Right ventricle myocardium inferior (tissue), 1 donor: ENCODE measurements at regions of chr12 and their contacts with region 1.

Region 1: GRCh38 chr12:115752913-115753726 is 524.4 kb downstream of the MED13L start:
- DNase-seq: no peak
- ATAC-seq: peak; percentile 90

Region 2: DNA sequence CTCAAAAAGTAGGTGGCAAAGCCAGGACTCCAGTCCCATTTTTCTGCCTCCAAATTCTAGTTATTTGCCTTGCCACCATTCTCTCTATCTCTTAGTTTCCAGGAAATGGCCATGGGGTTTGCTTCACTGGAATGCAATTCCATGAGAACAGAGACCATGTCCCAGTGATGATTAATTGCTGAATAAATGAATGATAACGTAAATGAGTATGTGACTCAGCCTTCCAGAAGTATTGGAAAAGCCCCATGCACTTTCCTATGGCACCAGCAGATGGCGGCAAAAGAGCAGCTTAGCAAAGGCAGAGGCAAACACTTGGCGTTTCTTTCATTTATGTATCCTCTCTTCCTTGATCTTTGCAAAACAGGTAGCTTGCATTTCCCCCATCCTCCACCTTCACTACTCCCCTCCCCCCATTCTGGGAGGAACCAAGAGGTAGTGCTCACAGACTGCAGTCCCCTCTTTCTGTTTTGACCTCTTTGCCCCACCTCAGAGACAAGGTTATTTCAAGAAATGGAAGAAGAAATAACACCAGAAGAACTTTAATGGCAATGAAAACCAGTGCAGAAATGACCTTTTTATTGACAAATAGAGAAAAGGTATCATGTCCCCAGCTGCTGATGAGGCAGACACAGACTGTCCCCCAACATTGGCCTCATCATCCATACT is 1090.5 kb before region 1 on chr12:
- intact Hi-C with region 1: loop called (anchors 1 kb)
- DNase-seq: no peak
- ATAC-seq: peak; percentile 37

Region 3: DNA sequence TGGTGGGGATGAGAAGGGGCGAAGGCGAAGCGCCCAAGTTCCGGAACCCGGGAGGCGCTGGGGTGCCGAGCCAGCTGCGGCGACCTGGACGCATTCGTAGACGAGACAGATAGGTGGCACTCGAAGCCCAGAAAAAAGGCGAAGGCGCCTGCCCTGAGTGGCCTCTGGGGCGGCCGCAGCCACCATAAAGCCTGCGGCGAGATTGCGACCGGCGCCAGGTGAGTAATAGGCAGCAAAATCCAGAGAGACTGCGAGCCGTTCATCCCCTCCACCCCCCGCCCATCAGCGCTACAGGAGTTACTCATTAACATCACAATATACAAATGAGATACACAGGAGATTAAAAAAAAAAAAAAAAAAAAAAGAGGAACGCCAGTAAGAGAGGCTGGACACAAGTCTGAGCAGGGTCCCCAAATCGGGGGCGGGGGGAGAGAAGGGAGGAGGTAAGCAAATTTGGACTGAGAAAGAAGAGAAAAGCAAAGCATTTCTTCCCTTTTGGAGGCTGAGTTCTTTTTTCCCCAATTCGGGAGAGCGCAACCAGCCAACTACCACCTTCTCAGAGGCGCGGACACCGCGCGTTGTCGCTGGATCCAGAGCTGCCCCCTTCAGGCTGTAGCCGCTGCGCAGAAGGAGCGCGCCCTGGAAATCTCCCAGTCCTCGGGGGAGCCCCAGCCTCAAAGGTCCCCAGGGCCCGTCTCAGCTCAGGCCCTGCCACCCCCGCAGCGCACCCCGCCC is 1084.8 kb before region 1 on chr12:
- intact Hi-C with region 1: loop called (anchors 1 kb)
- DNase-seq: peak; percentile 76
- ATAC-seq: peak; percentile 94

Region 4: DNA sequence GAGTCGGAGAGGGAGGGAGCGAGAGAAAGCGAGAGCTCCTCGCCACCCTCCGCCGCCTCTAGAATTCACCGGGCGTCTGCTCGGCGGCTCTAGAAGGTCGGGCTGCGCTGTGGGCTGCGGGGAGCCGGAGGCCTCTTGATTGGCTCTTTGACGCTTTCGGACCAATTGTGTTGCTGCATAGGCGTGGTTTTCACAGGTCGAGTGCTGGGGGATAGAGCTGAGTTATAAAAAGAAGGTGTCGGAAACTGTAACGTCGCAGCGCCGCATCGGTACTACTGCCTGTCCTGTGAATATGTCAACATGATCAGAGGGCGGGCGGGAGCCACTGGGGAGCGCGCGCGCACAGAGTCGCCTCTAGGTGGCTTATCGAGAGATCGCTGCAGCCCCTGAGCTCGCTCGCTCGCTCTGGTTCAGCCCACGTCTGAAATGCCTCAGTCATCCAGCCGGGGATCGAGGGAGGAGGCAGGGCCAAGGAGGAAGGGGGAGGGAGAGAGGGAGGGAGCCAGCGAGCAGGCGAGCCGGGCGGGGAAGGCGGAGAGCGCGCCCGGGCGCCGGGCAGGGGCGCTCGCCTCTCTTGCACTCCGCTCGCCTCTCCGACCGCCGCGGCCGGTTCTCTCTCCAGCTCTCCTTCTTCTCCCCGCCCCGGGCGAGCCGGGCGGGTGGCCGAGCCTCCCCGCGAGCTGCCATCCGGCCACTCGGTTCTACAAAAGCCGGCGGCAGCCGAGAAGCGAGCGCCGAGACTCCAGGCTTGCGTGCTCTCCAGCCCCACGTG is 1068.8 kb before region 1 on chr12 and contains the start of gene TBX3:
- intact Hi-C with region 1: loop called (anchors 5 kb)
- DNase-seq: peak; percentile 94
- ATAC-seq: peak; percentile 94
- total RNA-seq, gene TBX3: 11.9 TPM

Region 5: DNA sequence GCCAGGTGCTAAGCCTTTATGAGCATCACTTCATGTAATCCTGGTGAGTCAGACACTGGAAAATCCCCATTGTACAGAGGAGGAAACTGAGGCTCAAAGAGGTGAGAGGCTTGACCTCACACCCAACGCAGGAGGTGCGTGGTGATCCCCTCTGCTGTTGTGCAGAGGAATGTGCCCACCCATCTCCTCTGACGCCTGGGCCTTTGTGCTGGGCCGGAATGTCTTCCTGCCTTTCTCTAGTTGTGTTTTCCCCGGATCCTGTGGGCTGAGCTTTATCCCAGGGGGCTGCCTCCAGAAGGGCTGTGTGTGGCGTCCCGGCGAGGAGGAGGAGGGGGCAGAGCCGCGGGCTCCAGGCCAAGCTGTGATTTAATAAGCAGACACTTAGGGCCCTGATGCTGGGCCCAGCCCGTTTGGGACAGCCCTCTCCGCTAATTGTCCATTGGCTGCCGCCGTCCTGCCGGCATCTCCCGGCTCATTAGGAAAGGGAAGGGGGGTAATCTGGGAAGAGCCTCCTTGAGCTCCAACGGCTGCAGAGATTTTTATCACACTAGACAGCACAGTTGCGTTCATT is 129.3 kb before region 1 on chr12:
- intact Hi-C with region 1: loop called (anchors 2 kb)
- DNase-seq: peak; percentile 75
- ATAC-seq: peak; percentile 67

Region 6: GRCh38 chr12:115660211-115660805 is 92.8 kb before region 1 on chr12:
- intact Hi-C with region 1: loop called (anchors 5 kb)
- DNase-seq: no peak
- ATAC-seq: peak; percentile 50

Region 7: GRCh38 chr12:115726691-115727090 is 26.4 kb before region 1 on chr12:
- intact Hi-C with region 1: no loop called
- DNase-seq: no peak
- ATAC-seq: no peak

Region 8: GRCh38 chr12:115828186-115828585 is 75.1 kb after region 1 on chr12:
- intact Hi-C with region 1: no loop called
- DNase-seq: no peak
- ATAC-seq: no peak

Region 9: GRCh38 chr12:115871714-115872113 is 118.6 kb after region 1 on chr12:
- intact Hi-C with region 1: no loop called
- DNase-seq: no peak
- ATAC-seq: peak; percentile 39

Region 10: GRCh38 chr12:115916910-115917668 is 164.0 kb after region 1 on chr12:
- intact Hi-C with region 1: loop called (anchors 5 kb)
- DNase-seq: peak; percentile 80
- ATAC-seq: peak; percentile 53